Activated T-helper 1 cell treated with anti-CD3 and anti-CD28 coated beads, Interleukin-12 subunit alpha, Interleukin-12 subunit beta, Interleukin-2, Interleukin-4 antibody, amounts not matched to agents 30 ng/mL and 10 ng/mL and 1 ng/mL, durations not matched to agents 14 hours and 24 hours and 36 hours (primary cell): ENCODE measurements at regions of chr5 and their contacts with region 1.

Region 1: DNA sequence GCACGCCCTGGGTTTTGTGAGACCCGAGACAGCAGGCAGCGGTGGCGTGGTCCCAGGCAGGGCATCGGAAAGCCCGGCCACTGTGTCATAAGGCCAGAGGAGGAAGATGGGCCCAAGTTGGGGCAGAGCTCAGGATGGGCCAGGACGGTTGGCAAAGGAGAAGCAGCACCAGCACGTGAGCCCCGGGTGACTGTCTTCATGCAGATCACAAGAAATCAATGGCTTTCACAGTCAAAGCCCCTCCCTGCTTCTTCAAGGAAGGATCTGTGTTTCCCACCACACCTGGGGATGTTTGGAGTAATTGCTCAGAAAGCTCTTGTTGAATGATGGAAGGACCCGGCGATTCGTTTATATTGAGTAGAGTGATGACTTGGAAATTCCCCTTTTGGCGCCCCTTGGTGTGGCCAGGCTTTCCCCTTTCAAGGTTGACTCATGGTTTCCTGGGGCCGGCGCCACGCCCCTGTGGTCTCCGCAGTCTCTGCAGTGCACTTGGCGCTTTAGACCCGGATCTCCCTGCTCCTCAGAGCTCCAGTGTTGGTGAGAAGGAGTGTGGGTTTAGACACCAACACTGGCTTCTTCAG is 52.1 kb downstream of the IL31RA start:
- DNase-seq: peak; percentile 79
- H3K4me3 Mint-ChIP-seq: peak overlapping the region; percentile 55
- H3K27ac Mint-ChIP-seq: peak overlapping the region; percentile 78
- H3K4me1 Mint-ChIP-seq: peaks cover 67% of the 10 kb centered on the region
- H3K27me3 Mint-ChIP-seq: peaks cover 2% of the 10 kb centered on the region

Region 2: GRCh38 chr5:55771175-55771655 is 132.0 kb before region 1 on chr5:
- intact Hi-C with region 1: loop called (anchors 5 kb)
- DNase-seq: no peak
- H3K4me3 Mint-ChIP-seq: no peak overlapping the region
- H3K27ac Mint-ChIP-seq: no peak overlapping the region
- H3K4me1 Mint-ChIP-seq: peaks cover 19% of the 10 kb centered on the region
- H3K27me3 Mint-ChIP-seq: no peaks in the 10 kb centered on the region

Region 3: DNA sequence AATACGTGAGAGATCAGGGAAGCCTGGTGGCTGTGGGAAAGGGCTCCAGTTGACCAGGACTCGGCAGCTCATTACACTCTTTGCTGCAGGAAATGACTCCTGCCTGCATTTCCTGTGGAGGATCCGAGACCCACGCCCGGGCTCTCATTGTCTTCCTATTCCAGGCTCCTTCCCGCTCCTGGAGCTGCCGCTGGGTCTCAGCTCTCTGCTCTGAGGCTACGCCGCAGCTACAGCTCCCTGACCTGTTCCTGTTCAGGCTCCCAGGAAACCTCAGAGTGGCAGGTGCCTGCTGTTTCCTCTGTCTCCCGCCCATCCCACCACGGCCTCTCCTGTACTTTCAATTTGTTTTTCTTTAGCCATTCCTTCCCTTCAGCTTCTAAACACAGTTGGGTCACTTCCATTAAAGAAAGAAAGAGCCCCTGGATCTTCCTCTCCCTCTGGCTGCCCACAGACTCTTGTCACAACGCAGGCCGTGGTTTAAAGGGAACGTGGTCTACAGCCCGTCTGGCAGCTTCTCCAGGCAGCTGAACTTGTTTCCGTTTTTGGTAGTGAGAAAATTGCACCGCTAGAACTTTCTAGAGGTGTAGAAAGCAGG is 20.1 kb after region 1 on chr5:
- intact Hi-C with region 1: loop called (anchors 2 kb)
- DNase-seq: no peak
- H3K4me3 Mint-ChIP-seq: peak overlapping the region; percentile 82
- H3K27ac Mint-ChIP-seq: peak overlapping the region; percentile 79
- H3K4me1 Mint-ChIP-seq: peaks cover 41% of the 10 kb centered on the region
- H3K27me3 Mint-ChIP-seq: peaks cover 1% of the 10 kb centered on the region

Region 4: DNA sequence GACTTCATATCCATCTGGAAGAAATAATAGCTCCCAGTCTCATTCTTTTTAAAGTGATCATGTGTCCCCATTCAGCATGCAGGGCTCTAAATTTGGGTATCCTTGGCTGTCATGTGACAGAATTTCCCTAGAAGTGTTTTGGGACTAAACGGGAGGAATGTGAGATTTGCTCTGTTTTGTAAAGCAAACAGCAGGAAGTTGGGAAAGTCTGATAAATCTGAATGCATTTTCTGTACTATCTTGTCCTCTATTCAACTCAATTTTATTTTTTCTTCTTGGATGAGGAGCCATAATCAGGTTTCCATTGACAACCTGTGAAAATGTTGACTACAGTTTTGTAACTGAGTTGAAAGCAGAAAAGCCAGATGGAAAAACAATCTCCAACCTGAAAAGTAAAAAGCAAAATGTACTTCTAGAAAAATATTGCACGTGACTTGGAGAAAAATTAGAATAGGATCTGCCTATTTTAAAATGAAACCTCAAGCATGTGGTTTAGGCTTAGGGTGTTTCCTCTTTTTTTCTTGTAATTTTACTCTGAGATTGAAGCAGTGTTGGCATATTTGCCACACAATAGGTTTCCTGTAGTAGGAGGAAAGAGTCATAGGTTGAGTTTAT is 167.7 kb after region 1 on chr5:
- intact Hi-C with region 1: no loop called
- DNase-seq: no peak
- H3K4me3 Mint-ChIP-seq: peak overlapping the region; percentile 22
- H3K27ac Mint-ChIP-seq: no peak overlapping the region
- H3K4me1 Mint-ChIP-seq: peaks cover 64% of the 10 kb centered on the region
- H3K27me3 Mint-ChIP-seq: no peaks in the 10 kb centered on the region